Esophagus muscularis mucosa (tissue), 4 donors: ENCODE measurements at regions of chr6 and their contacts with region 1.

Region 1: DNA sequence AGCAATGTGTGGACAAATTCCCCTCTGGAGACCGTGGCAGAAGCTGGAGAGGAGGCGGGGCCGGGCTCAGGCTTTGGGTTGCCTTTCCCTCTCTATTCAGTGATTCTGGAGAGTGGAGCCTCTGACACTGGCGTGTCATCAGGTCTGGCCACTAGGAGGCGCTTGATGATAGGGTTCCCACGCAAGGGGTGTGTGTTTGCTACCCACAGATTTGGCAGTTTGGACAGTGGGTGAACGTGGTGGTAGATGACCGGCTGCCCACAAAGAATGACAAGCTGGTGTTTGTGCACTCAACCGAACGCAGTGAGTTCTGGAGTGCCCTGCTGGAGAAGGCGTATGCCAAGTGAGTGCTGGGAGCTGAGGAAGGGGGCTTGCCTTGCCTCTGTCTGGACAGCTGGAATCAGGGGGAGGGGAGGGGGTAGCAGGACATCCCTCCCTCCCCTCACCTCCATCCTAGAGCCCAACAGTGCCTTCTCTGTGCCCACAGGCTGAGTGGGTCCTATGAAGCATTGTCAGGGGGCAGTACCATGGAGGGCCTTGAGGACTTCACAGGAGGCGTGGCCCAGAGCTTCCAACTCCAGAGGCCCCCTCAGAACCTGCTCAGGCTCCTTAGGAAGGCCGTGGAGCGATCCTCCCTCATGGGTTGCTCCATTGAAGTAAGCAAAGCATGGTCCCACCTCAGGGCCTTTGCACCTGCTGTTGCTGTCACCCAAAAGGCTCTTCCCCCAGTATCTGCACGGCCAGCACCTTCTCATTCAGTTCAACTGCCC is 14.3 kb downstream of the CAPN11 start:
- DNase-seq: peak; percentile 96
- H3K4me3 ChIP-seq: no peak overlapping the region
- H3K27ac ChIP-seq: no peak overlapping the region
- H3K4me1 ChIP-seq: peaks cover 7 to 19% (median 12%) of the 10 kb centered on the region in 4 donors
- H3K27me3 ChIP-seq: no peaks in the 10 kb centered on the region
- CTCF ChIP-seq: peak; percentile 91 to 94 (median 94)
- EP300 ChIP-seq: no peak
- POLR2A ChIP-seq: no peak

Region 2: DNA sequence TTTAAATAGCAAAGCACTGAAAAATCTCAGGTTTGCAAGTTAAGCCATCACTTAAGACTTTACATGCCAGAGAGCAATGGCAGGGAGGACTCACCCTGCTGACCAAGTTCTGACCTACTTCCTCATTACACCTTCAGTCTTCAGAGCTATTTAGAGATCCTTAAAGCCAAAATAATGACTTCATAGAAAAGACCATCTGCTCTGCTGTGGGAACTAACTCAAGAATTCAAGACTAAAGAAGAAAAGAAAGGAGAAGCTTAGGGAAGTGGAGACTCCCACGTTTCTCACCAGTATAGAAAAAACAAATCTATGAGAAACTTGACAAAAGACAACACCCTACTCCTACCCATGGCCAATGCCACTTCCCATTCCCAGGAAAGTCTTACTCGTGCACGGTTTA is 625.7 kb before region 1 on chr6:
- intact Hi-C with region 1: no loop called
- DNase-seq: no peak
- H3K4me3 ChIP-seq: no peak overlapping the region
- H3K27ac ChIP-seq: no peak overlapping the region
- H3K4me1 ChIP-seq: no peaks in the 10 kb centered on the region
- H3K27me3 ChIP-seq: no peaks in the 10 kb centered on the region
- CTCF ChIP-seq: no peak
- EP300 ChIP-seq: no peak
- POLR2A ChIP-seq: no peak

Region 3: DNA sequence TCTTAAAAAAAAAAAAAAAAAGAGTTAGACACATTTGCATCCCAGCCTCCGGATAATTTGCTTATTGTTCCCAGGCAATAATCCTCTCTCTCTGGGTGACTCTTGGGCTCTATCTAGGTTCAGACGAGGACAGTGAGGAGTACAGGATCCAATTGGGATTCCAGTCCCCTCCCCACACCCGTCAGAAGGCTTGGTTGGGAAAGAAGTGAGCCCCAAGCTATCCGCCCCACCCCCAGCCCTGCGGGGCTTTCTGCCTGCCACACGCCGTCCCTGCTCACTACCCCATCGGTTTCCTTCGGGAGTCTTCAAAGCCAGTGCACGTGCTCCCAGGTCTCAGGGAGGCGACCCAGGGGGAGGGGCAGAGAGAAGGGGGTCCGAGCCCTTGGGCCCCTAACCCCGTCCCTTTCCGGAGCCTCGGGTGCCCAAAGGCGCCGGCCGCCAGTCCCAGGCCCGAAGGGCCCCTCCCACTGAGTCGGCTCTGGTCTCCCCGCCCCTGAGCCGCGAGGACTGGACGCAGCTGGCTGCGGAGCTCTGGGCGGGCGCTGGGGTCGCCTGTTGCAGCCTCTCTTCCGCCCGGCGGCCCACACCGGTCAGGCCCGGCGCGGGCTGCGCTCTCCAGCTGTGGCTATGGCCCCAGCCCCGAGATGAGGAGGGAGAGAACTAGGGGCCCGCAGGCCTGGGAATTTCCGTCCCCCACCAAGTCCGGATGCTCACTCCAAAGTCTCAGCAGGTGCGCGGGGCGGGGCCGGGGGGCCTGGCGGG is 46.3 kb after region 1 on chr6:
- intact Hi-C with region 1: loop called (anchors 5 kb)
- DNase-seq: peak; percentile 95
- H3K4me3 ChIP-seq: peak overlapping the region; percentile 62 to 75 (median 68)
- H3K27ac ChIP-seq: peak overlapping the region; percentile 95 to 98 (median 96)
- H3K4me1 ChIP-seq: peaks cover 59 to 83% (median 78%) of the 10 kb centered on the region in 4 donors
- H3K27me3 ChIP-seq: no peaks in the 10 kb centered on the region
- CTCF ChIP-seq: no peak
- EP300 ChIP-seq: no peak
- POLR2A ChIP-seq: peak; percentile 53

Region 4: GRCh38 chr6:44237813-44238433 is 65.0 kb after region 1 on chr6:
- intact Hi-C with region 1: loop called (anchors 5 kb)
- DNase-seq: peak; percentile 95
- H3K4me3 ChIP-seq: peak overlapping the region; percentile 64 to 74 (median 67)
- H3K27ac ChIP-seq: peak overlapping the region; percentile 95 to 98 (median 96)
- H3K4me1 ChIP-seq: peaks cover 51 to 57% (median 53%) of the 10 kb centered on the region in 4 donors
- H3K27me3 ChIP-seq: no peaks in the 10 kb centered on the region
- CTCF ChIP-seq: peak in 2 of 3 experiments; percentile 95 to 96
- EP300 ChIP-seq: no peak
- POLR2A ChIP-seq: peak; percentile 43

Region 5: GRCh38 chr6:44257025-44257752 is 84.3 kb after region 1 on chr6 and contains the start of gene SLC35B2:
- intact Hi-C with region 1: loop called (anchors 2 kb)
- DNase-seq: no peak
- H3K4me3 ChIP-seq: peak within 1 kb of the TSS; percentile 95 to 99 (median 98)
- H3K27ac ChIP-seq: peak within 1 kb of the TSS; percentile 92 to 97 (median 94)
- H3K4me1 ChIP-seq: peaks cover 19 to 59% (median 44%) of the 10 kb centered on the region in 4 donors
- H3K27me3 ChIP-seq: no peaks in the 10 kb centered on the region
- CTCF ChIP-seq: peak; percentile 85 to 91 (median 88)
- EP300 ChIP-seq: no peak
- POLR2A ChIP-seq: peak; percentile 66
- total RNA-seq, gene SLC35B2: 22.8 to 37.9 (median 32.6) TPM

Region 6: DNA sequence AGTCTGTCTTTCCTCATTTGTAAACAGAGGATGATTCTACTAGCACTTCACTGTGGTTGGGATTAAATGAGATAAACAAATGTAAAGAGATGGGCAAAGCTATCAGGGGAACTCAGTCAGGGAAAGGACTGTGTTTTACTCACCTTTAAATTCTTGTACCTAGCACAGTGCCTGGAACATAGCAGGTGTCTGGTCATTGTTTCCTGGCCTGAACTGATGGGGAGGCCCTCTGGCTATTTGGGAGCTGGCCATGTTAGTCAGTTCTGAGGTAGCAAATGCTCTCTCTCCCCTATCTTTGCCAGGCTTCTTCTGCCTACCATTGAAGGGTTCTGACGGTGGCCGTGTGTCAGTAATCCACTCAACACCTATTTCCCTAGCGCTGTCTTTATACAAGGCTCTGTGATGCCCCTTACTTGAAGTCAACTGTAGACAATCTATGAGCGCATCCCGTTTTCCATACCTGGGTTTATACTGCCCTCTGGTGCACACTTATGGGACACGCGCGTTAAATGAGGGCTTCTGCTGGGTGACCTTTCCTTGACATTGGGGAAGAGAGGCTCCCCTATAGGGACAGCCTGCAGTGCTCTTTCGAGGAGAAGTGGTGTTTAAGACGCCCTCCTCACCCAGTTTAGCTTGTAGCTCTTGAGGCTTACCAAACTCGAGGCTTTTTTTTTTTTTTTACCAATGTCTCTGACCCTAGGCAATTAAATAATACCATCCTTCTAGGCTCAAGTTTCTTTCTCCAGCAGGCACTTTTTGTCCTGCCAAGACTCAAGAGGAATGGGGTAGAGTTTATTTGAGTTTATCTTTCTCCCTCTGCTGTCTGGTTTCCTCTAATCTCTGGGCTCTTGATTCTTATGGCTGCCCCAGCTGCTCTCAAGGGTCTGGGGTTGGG is 165.6 kb after region 1 on chr6:
- intact Hi-C with region 1: loop called (anchors 5 kb)
- DNase-seq: no peak
- H3K4me3 ChIP-seq: no peak overlapping the region
- H3K27ac ChIP-seq: peak overlapping the region; percentile 42 to 72 (median 49)
- H3K4me1 ChIP-seq: peaks cover 5 to 28% (median 19%) of the 10 kb centered on the region in 4 donors
- H3K27me3 ChIP-seq: peaks cover 0 to 34% (median 2%) of the 10 kb centered on the region in 4 donors
- CTCF ChIP-seq: peak; percentile 71 to 80 (median 74)
- EP300 ChIP-seq: no peak
- POLR2A ChIP-seq: no peak